ENCODE measurements at regions of chr15 and their contacts with region 1.

Region 1: DNA sequence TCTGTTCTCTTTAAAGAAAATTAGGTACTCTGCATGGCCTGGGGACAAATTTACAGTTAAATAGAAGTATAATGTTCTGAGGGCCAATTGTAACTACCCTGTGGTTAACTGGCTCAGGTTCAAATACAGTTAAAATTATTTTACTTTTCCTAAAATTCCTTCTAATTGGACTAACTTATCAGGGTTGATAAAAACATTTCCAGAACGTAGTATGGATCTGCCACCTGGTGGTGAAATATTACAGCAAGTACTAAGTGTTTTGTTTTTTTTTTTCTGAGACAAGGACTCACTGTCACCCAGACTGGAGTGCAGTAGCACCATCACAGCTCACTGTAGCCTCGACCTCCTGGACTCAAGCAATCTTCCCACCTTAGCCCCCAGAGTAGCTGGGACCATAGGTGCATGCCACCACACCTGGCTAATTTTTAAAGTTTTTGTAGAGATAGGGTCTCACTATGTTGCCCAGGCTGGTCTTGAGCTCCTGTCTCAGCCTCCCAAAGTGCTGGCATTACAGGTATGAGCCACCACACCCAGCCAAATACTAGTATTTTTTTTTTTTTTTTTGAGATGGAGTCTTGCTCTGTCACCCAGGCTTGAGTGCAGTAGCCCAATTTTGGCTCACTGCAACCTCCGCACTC is 29.2 kb downstream of the NEO1 start:
- DNase-seq: peak; percentile 17
- H3K4me3 ChIP-seq: no peak overlapping the region
- H3K27ac ChIP-seq: no peak overlapping the region
- H3K4me1 ChIP-seq: peaks cover 0 to 14% of the 10 kb centered on the region in 2 experiments; a peak in 2 of 4 replicates
- H3K27me3 ChIP-seq: no peaks in the 10 kb centered on the region
- CTCF ChIP-seq: peak; percentile 85
- EP300 ChIP-seq: no peak
- RAD21 ChIP-seq: peak; percentile 82

Region 2: GRCh38 chr15:72933976-72934375 is 147.5 kb before region 1 on chr15:
- CTCF ChIA-PET with region 1: no interaction called
- POLR2A ChIA-PET with region 1: no interaction called
- DNase-seq: no peak
- H3K4me3 ChIP-seq: no peak overlapping the region
- H3K27ac ChIP-seq: no peak overlapping the region
- H3K4me1 ChIP-seq: no peaks in the 10 kb centered on the region
- H3K27me3 ChIP-seq: no peaks in the 10 kb centered on the region
- CTCF ChIP-seq: no peak
- EP300 ChIP-seq: no peak
- RAD21 ChIP-seq: no peak

Region 3: GRCh38 chr15:73022161-73022560 is 59.3 kb before region 1 on chr15:
- CTCF ChIA-PET with region 1: no interaction called
- POLR2A ChIA-PET with region 1: no interaction called
- DNase-seq: no peak
- H3K4me3 ChIP-seq: no peak overlapping the region
- H3K27ac ChIP-seq: no peak overlapping the region
- H3K4me1 ChIP-seq: peaks cover 0 to 2% of the 10 kb centered on the region in 2 experiments; a peak in 1 of 4 replicates
- H3K27me3 ChIP-seq: peaks cover 4% of the 10 kb centered on the region; the same call in 1 of the 2 replicates
- CTCF ChIP-seq: no peak
- EP300 ChIP-seq: no peak
- RAD21 ChIP-seq: no peak

Region 4: DNA sequence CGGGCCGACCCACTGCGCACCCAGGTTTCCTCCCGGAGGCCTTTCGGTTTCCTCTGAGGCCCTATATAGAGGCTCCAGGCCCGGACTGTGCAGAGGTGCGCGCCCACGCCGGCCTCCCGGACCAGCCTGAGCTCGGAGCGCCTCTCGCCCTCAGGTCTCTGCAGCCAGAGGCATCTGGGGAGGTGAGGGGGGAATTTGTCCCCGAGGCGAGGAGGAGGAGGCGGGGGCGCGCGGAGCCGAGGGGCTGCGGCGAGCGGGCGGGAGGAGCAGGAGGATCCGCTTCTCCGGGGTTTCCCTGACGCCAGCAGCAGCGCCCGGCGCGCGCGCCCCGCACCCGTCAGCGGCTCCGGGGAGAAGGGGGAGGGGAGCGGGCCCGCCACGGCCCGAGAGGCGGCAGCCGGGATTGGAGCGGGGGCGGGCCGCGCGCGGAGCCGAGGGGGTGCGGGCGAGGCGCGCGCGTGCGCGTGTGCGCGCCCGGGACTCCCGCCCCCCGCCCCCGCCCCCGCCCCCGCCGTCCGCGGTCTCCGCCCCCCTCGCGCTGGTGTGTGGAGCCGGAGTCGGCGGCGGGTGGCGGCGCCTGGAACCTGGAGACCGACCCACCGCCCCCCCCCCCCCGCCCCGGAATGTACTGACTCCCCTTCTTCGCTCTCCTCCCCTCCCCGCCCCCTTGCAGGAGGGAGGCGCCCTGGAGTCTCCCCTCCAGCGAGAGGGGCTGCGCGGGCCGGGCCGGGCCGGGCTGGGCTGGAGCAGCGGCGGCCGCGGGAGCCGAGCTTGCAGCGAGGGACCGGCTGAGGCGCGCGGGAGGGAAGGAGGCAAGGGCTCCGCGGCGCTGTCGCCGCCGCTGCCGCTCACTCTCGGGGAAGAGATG is 29.4 kb before region 1 on chr15 and contains the start of gene NEO1:
- CTCF ChIA-PET with region 1: interaction called, 11 read pairs
- POLR2A ChIA-PET with region 1: no interaction called
- DNase-seq: peak; percentile 97
- H3K4me3 ChIP-seq: peak within 1 kb of the TSS; percentile 76 to 83
- H3K27ac ChIP-seq: peak within 1 kb of the TSS; percentile 60 to 95
- H3K4me1 ChIP-seq: peaks cover 0 to 5% of the 10 kb centered on the region in 2 experiments; a peak in 2 of 4 replicates
- H3K27me3 ChIP-seq: no peaks in the 10 kb centered on the region
- CTCF ChIP-seq: no peak
- EP300 ChIP-seq: 0 out of 4 replicates have a peak, but pooled peaks of 1 of the 2 experiments have one; percentile 8
- RAD21 ChIP-seq: no peak
- polyA plus RNA-seq, gene NEO1: 12.7 and 13.1 TPM in 2 replicates

Region 5: DNA sequence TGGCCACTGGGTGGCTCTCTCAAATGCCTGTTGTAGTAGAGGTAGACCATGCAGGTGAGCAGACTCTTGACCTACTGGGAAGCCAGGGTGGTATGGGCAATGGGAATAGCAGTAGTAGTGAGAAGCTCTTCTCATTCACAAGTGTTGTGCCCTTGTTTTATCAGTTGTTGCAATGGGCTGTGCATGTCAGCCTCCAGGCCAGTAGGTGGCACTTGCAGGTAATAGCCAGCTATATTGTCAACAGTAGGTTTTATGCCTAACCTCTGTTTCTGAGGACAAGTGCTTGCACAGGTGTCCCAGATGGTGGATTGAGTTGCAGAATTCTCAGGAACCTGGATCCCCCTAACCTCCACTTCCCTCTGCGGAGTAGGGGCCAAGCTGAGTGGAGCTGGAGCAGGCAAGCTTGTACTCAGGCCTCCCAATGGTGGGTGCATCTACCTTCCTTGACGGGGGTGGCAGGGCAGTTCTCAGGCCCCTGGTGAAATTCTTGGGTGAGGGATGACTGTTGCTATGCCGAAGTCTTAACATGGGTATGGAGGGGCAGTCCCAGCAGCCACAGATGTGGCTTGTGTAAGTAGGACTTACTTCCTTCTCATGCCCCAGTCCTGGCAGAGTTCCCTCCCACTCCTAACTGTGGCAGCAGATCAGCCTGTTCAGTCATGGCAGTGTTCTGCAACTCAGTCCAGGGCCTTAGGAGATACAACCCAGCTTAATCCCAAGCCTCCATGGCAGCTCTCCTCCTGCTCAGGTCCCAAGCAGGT is 75.2 kb after region 1 on chr15:
- CTCF ChIA-PET with region 1: no interaction called
- POLR2A ChIA-PET with region 1: no interaction called
- DNase-seq: no peak
- H3K4me3 ChIP-seq: no peak overlapping the region
- H3K27ac ChIP-seq: no peak overlapping the region
- H3K4me1 ChIP-seq: no peaks in the 10 kb centered on the region
- H3K27me3 ChIP-seq: no peaks in the 10 kb centered on the region
- CTCF ChIP-seq: no peak
- EP300 ChIP-seq: no peak
- RAD21 ChIP-seq: no peak

Measured in SK-N-SH (cell line).